Activated CD4-positive, alpha-beta T cell treated with anti-CD3 and anti-CD28 coated beads, Interleukin-2, amount 10 ng/mL, durations not matched to agents 24 days and 14 days (primary cell): ENCODE measurements at regions of chrX and their contacts with region 1.

Region 1: GRCh38 chrX:65451663-65452062 is 82.9 kb downstream of the LAS1L start:
- DNase-seq: peak; percentile 72
- H3K4me3 Mint-ChIP-seq: no peak overlapping the region
- H3K27ac Mint-ChIP-seq: no peak overlapping the region
- H3K4me1 Mint-ChIP-seq: no peaks in the 10 kb centered on the region
- H3K27me3 Mint-ChIP-seq: no peaks in the 10 kb centered on the region

Region 2: DNA sequence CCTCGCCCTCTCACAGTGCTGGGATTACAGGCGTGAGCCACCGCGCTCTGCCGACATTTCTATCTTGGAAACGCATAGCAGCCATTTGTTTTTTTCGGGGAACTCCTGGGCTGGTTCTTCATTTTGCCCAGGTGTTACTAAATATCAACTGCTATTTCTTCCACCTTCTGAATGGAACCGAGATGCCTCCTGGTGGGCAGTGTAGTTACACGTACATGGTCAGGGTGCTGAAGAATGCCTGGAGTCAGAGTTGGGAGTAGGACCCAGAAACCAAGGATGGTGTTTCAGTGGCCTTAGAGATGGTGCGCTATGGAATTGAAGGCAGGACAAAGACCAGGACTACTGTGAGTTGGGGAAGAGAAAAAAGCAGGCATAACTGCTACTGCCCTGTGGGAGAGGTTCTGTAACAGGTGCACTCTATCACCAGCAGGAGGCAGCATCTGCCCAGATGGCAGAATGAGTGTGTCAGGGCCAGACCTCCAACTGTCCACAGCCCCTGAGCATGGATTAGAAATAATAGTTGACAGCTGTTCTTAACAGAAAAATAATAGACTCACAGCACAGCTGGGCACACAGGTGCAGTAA is 557.1 kb before region 1 on chrX:
- intact Hi-C with region 1: loop called (anchors 2 kb)
- DNase-seq: peak; percentile 77
- H3K4me3 Mint-ChIP-seq: no peak overlapping the region
- H3K27ac Mint-ChIP-seq: no peak overlapping the region
- H3K4me1 Mint-ChIP-seq: peaks cover 2% of the 10 kb centered on the region
- H3K27me3 Mint-ChIP-seq: no peaks in the 10 kb centered on the region

Region 3: DNA sequence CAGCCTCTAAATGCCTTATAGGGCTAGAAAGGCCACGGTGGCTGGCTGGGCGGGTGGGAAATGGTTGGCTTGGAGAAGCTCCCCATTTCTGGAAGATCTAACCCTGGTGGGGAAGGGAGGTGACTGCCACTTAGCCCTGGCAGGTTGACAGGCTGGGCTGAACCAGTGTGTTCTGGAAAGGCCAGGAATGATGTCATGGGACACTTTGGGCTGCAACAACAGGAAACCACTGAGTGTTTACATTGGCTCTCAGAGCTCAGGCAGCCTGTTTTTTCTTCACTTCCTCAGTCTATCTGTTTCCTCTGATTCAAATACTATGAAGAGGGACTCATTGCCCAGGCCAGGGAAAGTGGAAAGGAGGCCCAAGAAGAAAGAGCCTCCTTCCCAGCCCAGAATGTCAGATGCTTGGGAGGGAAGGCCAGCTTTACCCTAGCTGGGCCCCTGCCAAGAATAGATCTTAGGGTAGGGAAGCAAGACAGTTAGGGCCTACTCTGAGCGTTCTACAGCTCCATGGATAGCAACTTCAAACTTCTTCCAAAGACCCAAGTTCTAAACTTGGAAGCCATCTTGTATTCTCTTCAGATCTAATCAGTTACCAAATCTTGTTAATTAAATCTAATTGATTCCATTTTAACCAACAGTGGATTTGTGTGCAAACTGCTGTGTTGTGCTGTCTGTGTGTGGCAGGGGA is 150.0 kb after region 1 on chrX:
- intact Hi-C with region 1: no loop called
- DNase-seq: peak; percentile 85
- H3K4me3 Mint-ChIP-seq: peak overlapping the region; percentile 59
- H3K27ac Mint-ChIP-seq: peak overlapping the region; percentile 94
- H3K4me1 Mint-ChIP-seq: peaks cover 57% of the 10 kb centered on the region
- H3K27me3 Mint-ChIP-seq: no peaks in the 10 kb centered on the region